ENCODE measurements at regions of chr6 and their contacts with region 1.

Region 1: GRCh38 chr6:44545224-44545623 is 157.7 kb downstream of the CDC5L start:
- DNase-seq: no peak
- H3K4me3 ChIP-seq: no peak overlapping the region
- H3K27ac ChIP-seq: no peak overlapping the region
- H3K4me1 ChIP-seq: no peaks in the 10 kb centered on the region
- H3K27me3 ChIP-seq: peaks cover 20% of the 10 kb centered on the region; the same call in 1 of the 2 replicates
- CTCF ChIP-seq: no peak

Region 2: DNA sequence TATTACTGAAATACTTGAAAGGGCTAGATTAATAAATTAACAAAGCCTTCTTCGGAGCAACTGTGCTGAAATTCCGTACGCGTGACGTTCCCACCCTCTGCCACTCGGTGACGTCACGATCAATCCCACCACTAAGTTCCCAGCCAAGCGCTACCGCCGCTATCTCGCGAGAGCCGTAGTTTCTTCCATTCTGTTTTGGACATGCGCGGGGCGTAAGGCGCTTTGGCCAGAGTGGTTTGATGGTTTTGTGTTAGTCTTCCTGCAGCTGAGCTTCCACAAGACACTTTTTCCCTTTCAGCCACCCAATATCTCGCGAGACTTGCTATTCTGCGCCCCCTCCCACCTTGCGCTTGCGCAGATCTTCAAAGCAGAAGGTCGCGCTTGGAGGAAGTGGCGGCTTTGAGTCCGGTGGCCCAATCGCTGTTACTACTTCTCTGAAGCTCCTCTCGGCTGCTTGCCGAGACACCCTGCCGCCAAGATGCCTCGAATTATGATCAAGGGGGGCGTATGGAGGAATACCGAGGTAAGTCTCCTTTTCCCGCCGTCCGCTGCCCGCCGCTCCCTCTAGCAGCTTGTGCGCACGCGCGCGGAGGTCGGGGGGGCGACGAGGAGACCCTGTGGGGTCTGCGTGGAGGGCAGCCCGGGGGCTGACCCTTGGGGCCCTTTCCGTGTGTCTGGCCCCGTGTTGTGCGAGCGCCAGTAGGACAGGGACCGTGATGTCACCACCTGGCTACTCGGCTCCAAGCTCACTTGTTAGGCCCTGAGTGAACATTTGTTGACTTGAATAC is 157.7 kb before region 1 on chr6 and contains the start of gene CDC5L:
- CTCF ChIA-PET with region 1: no interaction called
- POLR2A ChIA-PET with region 1: no interaction called
- intact Hi-C with region 1: no loop called
- DNase-seq: peak; percentile 94 to 95
- H3K4me3 ChIP-seq: peak within 1 kb of the TSS; percentile 58
- H3K27ac ChIP-seq: peak within 1 kb of the TSS; percentile 64
- H3K4me1 ChIP-seq: peaks cover 20% of the 10 kb centered on the region
- H3K27me3 ChIP-seq: 0 out of 2 replicates have a peak, but pooled peaks cover 5% of the 10 kb centered on the region
- CTCF ChIP-seq: no peak
- total RNA-seq, gene CDC5L: 17.8 and 24.0 TPM in 2 replicates

Region 3: GRCh38 chr6:44569931-44570385 is 24.7 kb after region 1 on chr6:
- CTCF ChIA-PET with region 1: no interaction called
- POLR2A ChIA-PET with region 1: no interaction called
- intact Hi-C with region 1: no loop called
- DNase-seq: no peak
- H3K4me3 ChIP-seq: no peak overlapping the region
- H3K27ac ChIP-seq: no peak overlapping the region
- H3K4me1 ChIP-seq: no peaks in the 10 kb centered on the region
- H3K27me3 ChIP-seq: no peaks in the 10 kb centered on the region
- CTCF ChIP-seq: no peak

Region 4: GRCh38 chr6:44681761-44682160 is 136.5 kb after region 1 on chr6:
- CTCF ChIA-PET with region 1: no interaction called
- POLR2A ChIA-PET with region 1: no interaction called
- intact Hi-C with region 1: no loop called
- DNase-seq: no peak
- H3K4me3 ChIP-seq: no peak overlapping the region
- H3K27ac ChIP-seq: no peak overlapping the region
- H3K4me1 ChIP-seq: no peaks in the 10 kb centered on the region
- H3K27me3 ChIP-seq: 0 out of 2 replicates have a peak, but pooled peaks cover 6% of the 10 kb centered on the region
- CTCF ChIP-seq: no peak

Region 5: DNA sequence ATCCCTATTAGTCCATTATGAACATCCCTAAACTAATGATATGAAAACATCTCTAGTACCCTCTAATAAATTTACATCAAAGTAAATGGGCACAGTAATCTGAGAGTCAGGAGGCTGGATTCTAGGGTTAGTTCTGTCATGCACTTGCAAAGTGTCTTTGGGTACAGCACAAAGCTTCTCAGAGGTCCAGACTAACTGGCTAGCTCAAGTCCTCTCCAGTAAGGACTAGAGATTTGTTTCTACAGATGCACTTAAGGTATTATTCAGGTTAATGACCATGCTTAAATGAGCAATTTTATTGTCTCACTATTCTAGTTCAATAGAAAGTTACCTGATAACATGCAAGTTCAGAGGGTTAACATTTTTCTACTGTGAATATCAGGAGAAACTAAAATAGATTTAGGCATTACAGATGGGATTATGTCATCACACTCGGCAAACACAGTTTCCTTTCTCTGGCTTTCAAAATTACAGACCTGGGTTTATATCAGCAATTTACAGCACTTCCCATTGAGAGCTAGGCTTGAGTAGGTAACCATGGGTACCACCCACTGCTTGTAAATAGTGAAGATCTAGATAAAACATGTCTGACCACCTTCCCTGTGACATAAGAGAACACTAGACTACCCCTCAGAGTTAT is 380.0 kb after region 1 on chr6:
- CTCF ChIA-PET with region 1: no interaction called
- POLR2A ChIA-PET with region 1: interaction called, 29 read pairs
- intact Hi-C with region 1: no loop called
- DNase-seq: peak in 1 of 2 experiments; percentile 2
- H3K4me3 ChIP-seq: no peak overlapping the region
- H3K27ac ChIP-seq: no peak overlapping the region
- H3K4me1 ChIP-seq: no peaks in the 10 kb centered on the region
- H3K27me3 ChIP-seq: no peaks in the 10 kb centered on the region
- CTCF ChIP-seq: no peak

Region 6: GRCh38 chr6:45132059-45132458 is 586.8 kb after region 1 on chr6:
- CTCF ChIA-PET with region 1: no interaction called
- POLR2A ChIA-PET with region 1: no interaction called
- intact Hi-C with region 1: no loop called
- DNase-seq: no peak
- H3K4me3 ChIP-seq: no peak overlapping the region
- H3K27ac ChIP-seq: no peak overlapping the region
- H3K4me1 ChIP-seq: no peaks in the 10 kb centered on the region
- H3K27me3 ChIP-seq: no peaks in the 10 kb centered on the region
- CTCF ChIP-seq: no peak

Measured in PC-9 (cell line).